ENCODE measurements at regions of chr15 and their contacts with region 1.

Region 1: DNA sequence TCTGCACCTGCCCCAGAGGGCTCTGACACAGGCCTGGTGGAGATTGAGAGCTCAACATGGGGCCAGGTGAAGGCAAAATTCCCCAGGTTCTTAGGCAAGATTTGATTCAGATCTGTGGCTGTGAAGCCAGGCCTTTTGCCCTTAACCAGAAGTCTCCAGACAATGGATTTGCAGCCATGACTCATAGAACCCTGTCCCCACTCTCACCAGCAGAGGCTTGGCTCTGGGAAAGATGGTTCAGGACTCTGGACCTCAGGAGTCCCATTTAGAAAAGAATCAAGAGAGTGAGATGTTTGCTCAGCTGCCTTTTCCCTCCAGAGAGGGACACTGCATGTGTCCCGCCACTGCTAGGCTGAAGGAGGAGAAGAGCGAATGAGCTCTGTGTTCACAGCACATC is 361.4 kb upstream of the ICE2 start:
- DNase-seq: no peak
- H3K4me3 Mint-ChIP-seq: no peak overlapping the region
- H3K27ac Mint-ChIP-seq: no peak overlapping the region
- H3K4me1 Mint-ChIP-seq: peaks cover 65% of the 10 kb centered on the region
- H3K27me3 Mint-ChIP-seq: peaks cover 57% of the 10 kb centered on the region

Region 2: GRCh38 chr15:60649845-60650548 is 190.3 kb before region 1 on chr15:
- intact Hi-C with region 1: loop called (anchors 5 kb)
- DNase-seq: peak; percentile 20
- H3K4me3 Mint-ChIP-seq: peak overlapping the region; percentile 50
- H3K27ac Mint-ChIP-seq: peak overlapping the region; percentile 71
- H3K4me1 Mint-ChIP-seq: peaks cover 27% of the 10 kb centered on the region
- H3K27me3 Mint-ChIP-seq: peaks cover 22% of the 10 kb centered on the region

Region 3: GRCh38 chr15:60713119-60714084 is 126.9 kb before region 1 on chr15:
- intact Hi-C with region 1: no loop called
- DNase-seq: no peak
- H3K4me3 Mint-ChIP-seq: no peak overlapping the region
- H3K27ac Mint-ChIP-seq: no peak overlapping the region
- H3K4me1 Mint-ChIP-seq: peaks cover 12% of the 10 kb centered on the region
- H3K27me3 Mint-ChIP-seq: peaks cover 2% of the 10 kb centered on the region

Region 4: GRCh38 chr15:60798821-60799220 is 41.5 kb before region 1 on chr15:
- intact Hi-C with region 1: loop called (anchors 2 kb)
- DNase-seq: no peak
- H3K4me3 Mint-ChIP-seq: no peak overlapping the region
- H3K27ac Mint-ChIP-seq: no peak overlapping the region
- H3K4me1 Mint-ChIP-seq: peaks cover 39% of the 10 kb centered on the region
- H3K27me3 Mint-ChIP-seq: peaks cover 9% of the 10 kb centered on the region

Region 5: DNA sequence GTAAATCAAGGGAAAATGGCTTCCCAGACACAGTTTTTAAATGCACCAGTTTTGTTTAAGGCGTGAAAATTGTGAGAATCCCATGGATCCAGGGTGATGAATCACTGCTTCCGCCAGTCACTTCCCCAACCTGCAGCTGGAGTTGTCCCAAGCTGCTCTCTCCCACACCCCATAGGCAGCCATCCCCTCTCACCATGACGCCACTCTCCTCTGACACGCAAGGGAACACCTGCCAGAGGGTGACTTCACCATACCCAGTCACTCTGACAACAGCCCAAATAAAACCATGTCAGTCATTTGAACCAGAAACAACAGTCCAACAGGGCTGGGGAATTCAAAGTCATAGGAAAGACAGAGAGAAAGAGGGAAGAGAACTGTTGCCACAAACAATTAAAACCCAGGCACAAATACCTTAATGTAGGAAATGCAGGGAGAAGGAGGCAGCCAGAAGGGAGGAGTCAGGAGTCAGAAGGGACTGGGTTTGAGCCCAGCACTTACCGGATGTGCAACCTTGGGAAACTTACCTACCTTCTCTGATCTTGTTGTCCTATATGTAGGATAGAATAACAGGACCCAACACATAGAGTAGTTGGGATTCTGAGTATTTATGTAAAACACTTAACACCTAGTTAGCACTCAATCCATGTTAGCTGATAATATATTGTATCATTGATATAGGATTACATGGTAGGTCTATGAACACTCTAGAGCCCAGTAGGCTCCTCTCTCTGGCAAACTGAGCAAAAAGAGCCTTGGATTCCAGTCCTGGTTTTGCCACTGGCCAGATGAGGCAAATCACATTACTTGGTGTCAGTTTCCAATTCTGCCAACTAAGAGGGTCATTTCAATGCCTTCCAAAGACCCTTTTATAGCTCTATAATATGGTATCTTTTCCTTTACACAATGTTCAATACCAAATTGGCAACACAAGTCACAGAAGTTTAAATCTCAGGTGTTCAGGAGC is 35.0 kb before region 1 on chr15:
- intact Hi-C with region 1: loop called (anchors 1 kb)
- DNase-seq: no peak
- H3K4me3 Mint-ChIP-seq: no peak overlapping the region
- H3K27ac Mint-ChIP-seq: no peak overlapping the region
- H3K4me1 Mint-ChIP-seq: peaks cover 29% of the 10 kb centered on the region
- H3K27me3 Mint-ChIP-seq: peaks cover 38% of the 10 kb centered on the region

Region 6: GRCh38 chr15:60815321-60815720 is 25.0 kb before region 1 on chr15:
- intact Hi-C with region 1: no loop called
- DNase-seq: no peak
- H3K4me3 Mint-ChIP-seq: no peak overlapping the region
- H3K27ac Mint-ChIP-seq: no peak overlapping the region
- H3K4me1 Mint-ChIP-seq: peaks cover 4% of the 10 kb centered on the region
- H3K27me3 Mint-ChIP-seq: peaks cover 44% of the 10 kb centered on the region

Region 7: DNA sequence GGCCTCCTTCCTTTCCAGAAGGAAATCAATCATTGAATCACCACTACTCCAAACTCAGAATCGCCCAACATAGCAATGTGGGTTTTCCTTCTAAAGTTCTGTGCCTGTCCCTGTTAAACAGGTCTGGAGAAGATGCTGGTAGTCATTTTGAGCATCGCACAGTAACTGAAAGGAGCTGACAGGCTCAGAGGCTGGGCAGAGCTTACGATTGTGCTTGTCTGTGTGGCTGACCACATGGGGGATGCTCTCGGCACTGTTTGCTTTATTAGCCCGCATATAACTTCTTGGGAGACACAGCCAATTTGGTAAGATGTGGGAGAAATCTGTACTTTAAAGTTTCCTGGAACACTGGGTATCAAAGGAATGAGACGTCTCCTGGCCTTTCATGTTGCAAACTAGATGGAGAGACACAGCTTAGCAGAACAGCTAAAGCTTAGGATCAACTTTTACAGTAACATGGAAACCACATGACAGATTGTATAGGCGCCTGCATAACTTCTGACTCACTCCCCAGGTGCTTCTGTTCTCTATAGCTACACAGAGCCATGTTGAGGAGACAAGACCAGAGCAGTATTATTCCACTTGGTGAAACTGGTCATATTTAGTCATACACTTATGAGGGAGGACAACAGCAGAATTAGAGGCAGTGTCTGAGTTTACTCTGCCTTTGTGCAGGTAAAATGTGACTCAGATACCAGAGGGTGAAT is 14.7 kb after region 1 on chr15:
- intact Hi-C with region 1: loop called (anchors 1 kb)
- DNase-seq: no peak
- H3K4me3 Mint-ChIP-seq: no peak overlapping the region
- H3K27ac Mint-ChIP-seq: no peak overlapping the region
- H3K4me1 Mint-ChIP-seq: peaks cover 26% of the 10 kb centered on the region
- H3K27me3 Mint-ChIP-seq: peaks cover 44% of the 10 kb centered on the region

Region 8: GRCh38 chr15:60916679-60917460 is 76.6 kb after region 1 on chr15:
- intact Hi-C with region 1: loop called (anchors 5 kb)
- DNase-seq: peak; percentile 69
- H3K4me3 Mint-ChIP-seq: no peak overlapping the region
- H3K27ac Mint-ChIP-seq: no peak overlapping the region
- H3K4me1 Mint-ChIP-seq: peaks cover 16% of the 10 kb centered on the region
- H3K27me3 Mint-ChIP-seq: peaks cover 27% of the 10 kb centered on the region